Heart right ventricle (tissue), 16 donors: ENCODE measurements at regions of chr6 and their contacts with region 1.

Region 1: GRCh38 chr6:135179920-135180541 is 1.1 kb upstream of the MYB start:
- DNase-seq: no peak
- ATAC-seq: no peak
- H3K4me3 ChIP-seq: peak overlapping the region in 9 of 10 donors; percentile 51 to 67 (median 57)
- H3K27ac ChIP-seq: no peak overlapping the region
- H3K4me1 ChIP-seq: peaks cover 0 to 35% (median 26%) of the 10 kb centered on the region in 9 donors
- H3K27me3 ChIP-seq: peaks cover 0 to 35% (median 33%) of the 10 kb centered on the region in 7 donors
- CTCF ChIP-seq: no peak

Region 2: DNA sequence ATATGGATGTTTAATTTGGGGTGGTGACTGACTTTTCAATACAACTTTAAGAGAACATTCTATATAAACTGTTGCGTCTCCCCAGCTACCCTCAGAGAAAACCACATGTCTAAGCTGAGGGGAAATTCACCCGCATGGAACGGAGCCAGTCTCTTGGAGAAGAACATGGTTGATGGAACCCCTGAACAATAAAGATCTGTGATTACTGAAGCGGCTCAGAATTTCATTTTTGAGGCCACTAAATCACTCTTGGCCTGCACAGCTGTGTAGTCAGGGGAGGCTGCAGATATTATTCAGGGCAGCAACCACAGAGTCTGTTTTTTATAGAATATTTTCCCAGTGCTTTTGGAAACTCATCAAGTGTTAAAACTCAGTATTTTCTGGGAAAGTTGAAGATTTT is 1865.1 kb before region 1 on chr6:
- intact Hi-C with region 1: loop called in 1 of 10 experiments (anchors 5 kb)
- DNase-seq: no peak
- ATAC-seq: no peak
- H3K4me3 ChIP-seq: no peak overlapping the region
- H3K27ac ChIP-seq: no peak overlapping the region
- H3K4me1 ChIP-seq: peaks cover 0 to 8% (median 0%) of the 10 kb centered on the region in 9 donors
- H3K27me3 ChIP-seq: no peaks in the 10 kb centered on the region
- CTCF ChIP-seq: no peak